Esophagus muscularis mucosa (tissue), 4 donors: ENCODE measurements at regions of chrX and their contacts with region 1.

Region 1: DNA sequence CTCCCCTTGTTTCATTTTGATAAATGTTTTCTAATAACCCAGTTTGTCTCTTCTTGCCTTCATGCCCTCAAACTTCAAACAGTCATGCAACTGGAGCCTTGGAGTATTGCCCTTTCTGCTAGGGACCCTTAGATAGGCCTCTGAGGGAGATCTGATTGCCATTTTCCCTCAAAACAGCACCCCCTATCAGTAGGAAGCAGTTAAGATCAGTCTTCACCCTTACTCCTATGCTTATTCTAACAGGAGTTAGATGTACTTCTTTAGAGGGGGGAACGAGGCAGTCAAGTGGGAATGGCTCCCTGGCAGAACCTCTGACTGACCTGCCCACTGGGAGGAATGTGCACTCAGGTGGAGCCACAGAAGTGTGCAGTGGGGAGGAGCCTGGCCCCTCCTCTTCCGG is 74.1 kb downstream of the FAM47A start:
- DNase-seq: no peak
- H3K4me3 ChIP-seq: no peak overlapping the region
- H3K27ac ChIP-seq: no peak overlapping the region
- H3K4me1 ChIP-seq: no peaks in the 10 kb centered on the region
- H3K27me3 ChIP-seq: no peaks in the 10 kb centered on the region
- CTCF ChIP-seq: no peak
- EP300 ChIP-seq: no peak
- POLR2A ChIP-seq: no peak

Region 2: GRCh38 chrX:34028488-34028887 is 29.5 kb before region 1 on chrX:
- intact Hi-C with region 1: loop called (anchors 5 kb)
- DNase-seq: no peak
- H3K4me3 ChIP-seq: no peak overlapping the region
- H3K27ac ChIP-seq: no peak overlapping the region
- H3K4me1 ChIP-seq: no peaks in the 10 kb centered on the region
- H3K27me3 ChIP-seq: no peaks in the 10 kb centered on the region
- CTCF ChIP-seq: no peak
- EP300 ChIP-seq: no peak
- POLR2A ChIP-seq: no peak

Region 3: GRCh38 chrX:34918856-34919255 is 860.9 kb after region 1 on chrX:
- intact Hi-C with region 1: no loop called
- DNase-seq: no peak
- H3K4me3 ChIP-seq: no peak overlapping the region
- H3K27ac ChIP-seq: no peak overlapping the region
- H3K4me1 ChIP-seq: peaks cover 0 to 6% (median 0%) of the 10 kb centered on the region in 4 donors
- H3K27me3 ChIP-seq: no peaks in the 10 kb centered on the region
- CTCF ChIP-seq: peak in 2 of 3 experiments; percentile 24 to 38
- EP300 ChIP-seq: no peak
- POLR2A ChIP-seq: no peak